ENCODE measurements at regions of chr10 and their contacts with region 1.

Region 1: GRCh38 chr10:17847585-17848296 is 38.6 kb downstream of the MRC1 start:
- DNase-seq: peak in 1 of 4 donors; percentile 41
- ATAC-seq: peak; percentile 41
- H3K4me3 ChIP-seq: no peak overlapping the region
- H3K27ac ChIP-seq: no peak overlapping the region
- H3K4me1 ChIP-seq: no peaks in the 10 kb centered on the region
- H3K27me3 ChIP-seq: no peaks in the 10 kb centered on the region
- CTCF ChIP-seq: peak in 1 of 2 donors; percentile 36

Region 2: DNA sequence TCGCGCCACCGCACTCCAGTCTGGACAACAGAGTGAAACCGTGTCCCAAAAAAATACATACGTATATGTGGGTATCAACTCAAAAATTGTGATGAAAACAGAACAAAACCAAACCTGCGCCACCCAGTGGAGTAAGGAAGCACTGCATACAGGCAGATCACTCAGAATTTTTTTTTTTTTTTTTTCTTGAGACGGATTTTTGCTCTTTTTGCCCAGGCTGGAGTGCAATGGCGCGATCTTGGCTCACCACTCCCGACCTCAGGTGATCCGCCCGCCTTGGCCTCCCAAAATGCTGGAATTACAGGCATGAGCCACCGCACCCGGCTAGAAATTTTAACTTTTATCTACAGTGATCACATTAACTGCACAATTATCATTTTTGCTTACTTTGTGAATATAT is 104.8 kb before region 1 on chr10:
- intact Hi-C with region 1: no loop called
- DNase-seq: peak in 3 of 4 donors; percentile 46 to 64 (median 47)
- ATAC-seq: peak; percentile 80
- H3K4me3 ChIP-seq: no peak overlapping the region
- H3K27ac ChIP-seq: no peak overlapping the region
- H3K4me1 ChIP-seq: peaks cover 0 to 17% of the 10 kb centered on the region in 2 donors
- H3K27me3 ChIP-seq: no peaks in the 10 kb centered on the region
- CTCF ChIP-seq: peak; percentile 69 to 93

Region 3: DNA sequence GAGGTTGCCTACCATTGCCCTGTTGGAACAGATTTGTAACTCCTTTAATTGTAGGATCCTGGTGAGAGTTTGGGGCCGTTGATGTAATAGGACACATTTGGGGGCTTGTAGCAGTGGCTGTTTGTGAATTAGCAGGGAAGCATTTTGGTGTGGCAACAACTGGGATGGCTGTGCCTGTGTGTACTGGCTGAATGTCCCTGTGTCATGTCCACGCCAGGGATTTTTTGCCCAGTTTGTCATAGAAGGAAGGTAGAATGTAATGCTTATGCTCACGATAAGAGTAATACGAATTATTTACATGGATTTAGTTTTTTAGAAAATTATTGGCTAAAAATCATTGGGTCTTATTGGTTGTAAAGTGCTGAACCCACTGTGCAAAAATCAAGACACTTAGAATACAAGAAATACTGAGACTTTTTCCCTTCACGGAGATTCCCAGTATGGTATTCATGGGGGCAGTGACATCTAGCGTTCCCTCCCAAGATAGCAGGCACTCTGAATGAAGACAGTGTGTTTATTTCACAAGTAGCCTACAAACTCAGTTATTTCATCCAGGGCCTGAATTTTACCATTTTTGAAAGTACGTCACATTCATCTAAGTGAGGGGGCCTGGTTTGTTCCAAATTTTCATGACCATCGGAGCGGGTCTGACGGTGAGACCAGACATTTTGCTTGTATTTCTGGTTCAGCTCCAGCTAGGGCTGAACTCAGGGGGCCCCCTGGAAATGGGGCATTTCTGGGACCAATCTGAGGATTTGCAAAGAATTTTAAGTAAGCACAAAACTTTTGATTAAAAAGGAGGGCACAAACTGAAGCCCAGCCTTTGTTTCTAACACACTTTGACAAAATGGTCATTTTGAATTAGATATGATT is 367.2 kb after region 1 on chr10:
- intact Hi-C with region 1: loop called in 1 of 2 experiments (anchors 10 kb)
- DNase-seq: peak in 2 of 4 donors; percentile 60 to 79
- ATAC-seq: peak; percentile 89
- H3K4me3 ChIP-seq: no peak overlapping the region
- H3K27ac ChIP-seq: no peak overlapping the region
- H3K4me1 ChIP-seq: no peaks in the 10 kb centered on the region
- H3K27me3 ChIP-seq: no peaks in the 10 kb centered on the region
- CTCF ChIP-seq: peak; percentile 61 to 73